Motor neuron (in vitro differentiated cells): ENCODE measurements at regions of chr20 and their contacts with region 1.

Region 1: GRCh38 chr20:62793912-62794724 is 2.2 kb upstream of the MRGBP start:
- ATAC-seq: peak; percentile 73 to 84 (median 76)
- H3K4me3 ChIP-seq: peak overlapping the region; percentile 68 to 92 (median 85)
- H3K27ac ChIP-seq: peak overlapping the region; percentile 55 to 74
- H3K4me1 ChIP-seq: peaks cover 2 to 14% of the 10 kb centered on the region in 2 donors

Region 2: GRCh38 chr20:62652051-62652926 is 141.8 kb before region 1 on chr20:
- in situ Hi-C with region 1: loop called in 2 of 9 experiments (anchors 25 kb)
- ATAC-seq: peak; percentile 74 to 92 (median 86)
- H3K4me3 ChIP-seq: no peak overlapping the region
- H3K27ac ChIP-seq: peak overlapping the region in 1 of 2 donors; percentile 79
- H3K4me1 ChIP-seq: peaks cover 28 to 33% of the 10 kb centered on the region in 2 donors

Region 3: GRCh38 chr20:62685781-62686555 is 108.2 kb before region 1 on chr20:
- in situ Hi-C with region 1: loop called in 4 of 9 experiments (anchors 10 to 25 kb)
- ATAC-seq: peak in 5 of 8 experiments; percentile 48 to 73 (median 69)
- H3K4me3 ChIP-seq: no peak overlapping the region
- H3K27ac ChIP-seq: peak overlapping the region in 1 of 2 donors; percentile 15
- H3K4me1 ChIP-seq: peaks cover 57 to 60% of the 10 kb centered on the region in 2 donors

Region 4: GRCh38 chr20:62887147-62887859 is 93.2 kb after region 1 on chr20:
- in situ Hi-C with region 1: no loop called
- ATAC-seq: peak in 7 of 8 experiments; percentile 4 to 67 (median 45)
- H3K4me3 ChIP-seq: no peak overlapping the region
- H3K27ac ChIP-seq: no peak overlapping the region
- H3K4me1 ChIP-seq: no peaks in the 10 kb centered on the region